Heart right ventricle (tissue), 16 donors: ENCODE measurements at regions of chr5 and their contacts with region 1.

Region 1: DNA sequence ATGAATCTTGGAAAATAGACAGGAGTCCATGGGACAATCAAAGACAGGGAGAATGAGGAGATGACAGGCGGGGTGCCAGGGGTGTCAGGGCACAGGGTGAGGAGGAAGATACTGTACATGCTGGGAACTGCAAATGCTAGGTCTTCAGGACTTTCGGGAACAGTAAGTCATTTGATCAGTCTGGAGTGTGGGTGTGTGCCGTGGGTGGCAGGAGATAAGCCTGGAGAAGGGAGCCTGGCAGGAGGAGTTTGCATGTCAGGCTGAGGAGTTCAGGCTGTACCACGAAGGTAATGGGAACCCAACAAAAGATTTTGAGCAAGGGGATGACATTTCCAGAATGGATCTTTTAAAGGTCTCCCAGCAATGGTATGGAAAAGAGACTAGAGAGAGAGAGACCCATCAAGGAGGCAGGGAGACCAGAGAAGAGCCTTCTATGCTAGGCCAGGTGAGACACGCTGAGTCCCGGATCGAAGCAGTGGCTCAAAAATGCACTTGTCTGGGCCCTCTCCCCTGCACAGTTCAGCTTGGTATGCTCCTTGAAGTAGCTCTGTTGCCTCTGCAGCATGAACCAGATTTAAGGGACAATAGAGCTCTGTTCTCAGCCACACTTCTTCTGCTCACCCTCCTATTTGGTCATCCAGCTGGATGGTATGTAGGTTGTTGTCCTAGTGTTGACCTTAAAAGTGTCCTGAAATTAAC is 77.0 kb upstream of the FER start:
- DNase-seq: no peak
- ATAC-seq: peak in 5 of 8 donors; percentile 57 to 81 (median 61)
- H3K4me3 ChIP-seq: no peak overlapping the region
- H3K27ac ChIP-seq: no peak overlapping the region
- H3K4me1 ChIP-seq: peaks cover 0 to 8% (median 0%) of the 10 kb centered on the region in 9 donors
- H3K27me3 ChIP-seq: no peaks in the 10 kb centered on the region
- CTCF ChIP-seq: no peak

Region 2: DNA sequence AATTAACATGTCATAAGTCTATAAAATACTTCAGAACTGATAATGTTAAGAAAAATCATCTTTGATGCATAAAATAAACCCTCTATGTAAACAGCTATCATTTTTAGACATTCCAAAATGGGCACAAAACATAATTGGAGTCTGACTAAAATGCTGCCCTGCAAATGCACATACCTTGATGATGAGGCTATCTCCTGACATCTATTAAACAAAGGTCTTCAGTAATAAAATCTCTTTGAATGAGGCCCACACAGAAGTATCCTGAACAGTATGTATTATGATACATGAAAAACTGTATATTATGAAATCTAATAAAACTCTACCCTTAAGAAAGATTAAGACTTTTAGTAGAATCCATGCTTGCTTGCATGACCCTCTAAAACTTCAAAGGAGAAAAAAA is 354.9 kb before region 1 on chr5:
- intact Hi-C with region 1: no loop called
- DNase-seq: no peak
- ATAC-seq: no peak
- H3K4me3 ChIP-seq: no peak overlapping the region
- H3K27ac ChIP-seq: no peak overlapping the region
- H3K4me1 ChIP-seq: peaks cover 0 to 12% (median 6%) of the 10 kb centered on the region in 9 donors
- H3K27me3 ChIP-seq: no peaks in the 10 kb centered on the region
- CTCF ChIP-seq: no peak

Region 3: GRCh38 chr5:108615216-108615615 is 55.5 kb before region 1 on chr5:
- intact Hi-C with region 1: no loop called
- DNase-seq: no peak
- ATAC-seq: no peak
- H3K4me3 ChIP-seq: no peak overlapping the region
- H3K27ac ChIP-seq: no peak overlapping the region
- H3K4me1 ChIP-seq: no peaks in the 10 kb centered on the region
- H3K27me3 ChIP-seq: peaks cover 0 to 3% (median 0%) of the 10 kb centered on the region in 7 donors
- CTCF ChIP-seq: no peak

Region 4: DNA sequence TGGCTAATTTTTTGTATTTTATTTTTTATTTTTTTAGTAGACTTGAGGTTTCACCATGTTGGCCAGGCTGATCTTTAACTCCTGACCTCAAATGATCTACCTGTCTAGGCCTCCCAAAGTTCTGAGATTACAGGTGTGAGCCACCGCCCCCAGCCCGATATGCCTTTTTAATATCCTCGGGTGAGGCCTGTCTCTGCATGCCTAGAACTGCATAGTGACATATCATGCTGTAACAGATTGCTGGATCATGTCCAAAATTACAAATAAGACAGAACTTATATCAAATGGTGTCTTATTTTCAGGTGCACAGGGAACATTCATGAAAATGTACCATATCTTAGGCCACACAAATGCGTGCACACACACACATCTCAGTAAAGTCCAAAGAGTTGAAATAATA is 778.1 kb after region 1 on chr5:
- intact Hi-C with region 1: loop called in 1 of 10 experiments (anchors 10 kb)
- DNase-seq: no peak
- ATAC-seq: no peak
- H3K4me3 ChIP-seq: no peak overlapping the region
- H3K27ac ChIP-seq: no peak overlapping the region
- H3K4me1 ChIP-seq: peaks cover 0 to 3% (median 0%) of the 10 kb centered on the region in 9 donors
- H3K27me3 ChIP-seq: no peaks in the 10 kb centered on the region
- CTCF ChIP-seq: no peak